Left cardiac atrium (tissue), 4 donors: ENCODE measurements at regions of chr11 and their contacts with region 1.

Region 1: DNA sequence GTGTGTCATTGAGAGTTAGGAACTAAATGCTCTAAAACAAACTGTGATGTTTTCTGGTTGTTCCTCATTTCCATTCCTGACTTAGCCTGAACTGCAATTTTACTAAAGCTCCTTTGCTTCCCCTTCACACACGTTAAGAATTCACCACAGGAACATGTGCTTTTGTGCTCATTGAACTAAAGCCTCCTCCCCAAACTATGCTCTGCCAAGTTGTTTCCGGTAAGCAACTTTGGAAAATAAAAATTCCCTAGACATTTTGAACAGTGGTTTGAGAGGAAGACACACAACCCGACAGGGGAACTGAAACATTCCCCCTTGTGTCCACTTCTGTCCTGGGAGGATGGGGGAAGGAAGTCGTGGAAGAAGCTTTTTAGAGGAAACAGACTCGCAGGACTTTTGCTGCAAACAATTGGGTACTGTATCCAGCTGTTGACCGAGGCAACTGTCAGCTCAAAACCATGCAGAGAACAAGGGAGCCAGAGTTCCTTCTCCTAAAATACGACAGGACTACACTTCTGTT is 66.9 kb downstream of the GAB2 start:
- DNase-seq: no peak
- ATAC-seq: peak; percentile 70 to 75

Region 2: DNA sequence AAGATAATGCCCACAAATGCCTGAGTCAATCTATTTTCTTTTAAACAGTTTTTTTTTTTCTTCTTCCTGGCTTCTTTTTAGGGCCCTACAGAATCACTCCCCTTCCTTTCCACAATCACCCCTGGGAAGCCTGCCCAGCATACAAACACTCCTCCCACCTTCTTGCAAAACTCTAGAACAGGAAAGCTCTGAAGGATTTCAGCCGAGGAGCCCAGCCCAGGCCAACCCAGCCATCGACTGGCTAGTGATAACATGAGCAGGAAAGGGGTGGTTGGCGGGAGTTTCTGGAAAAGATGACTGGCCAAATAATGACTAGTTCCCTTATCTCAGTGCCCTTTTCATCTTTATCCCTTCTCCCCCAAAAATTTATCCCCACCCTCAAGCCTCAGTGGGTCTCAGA is 93.7 kb before region 1 on chr11:
- intact Hi-C with region 1: loop called in 1 of 2 experiments (anchors 5 kb)
- DNase-seq: peak; percentile 93
- ATAC-seq: peak; percentile 94 to 97